GM12878 (cell line): ENCODE measurements at regions of chr4 and their contacts with region 1.

Region 1: GRCh38 chr4:38132107-38132673 is 172.0 kb downstream of the PTTG2 start:
- DNase-seq: peak; percentile 100
- ATAC-seq: peak; percentile 63
- H3K4me3 ChIP-seq: 0 out of 2 replicates have a peak overlapping the region, but pooled peaks have one; percentile 10
- H3K27ac ChIP-seq: peak overlapping the region; percentile 96
- H3K4me1 ChIP-seq: peaks cover 68% of the 10 kb centered on the region
- H3K27me3 ChIP-seq: no peaks in the 10 kb centered on the region
- CTCF ChIP-seq: no peak
- EP300 ChIP-seq: peak; percentile 100
- POLR2A ChIP-seq: peak; percentile 74
- RAD21 ChIP-seq: peak; percentile 14; the same call in 1 of the 2 replicates

Region 2: DNA sequence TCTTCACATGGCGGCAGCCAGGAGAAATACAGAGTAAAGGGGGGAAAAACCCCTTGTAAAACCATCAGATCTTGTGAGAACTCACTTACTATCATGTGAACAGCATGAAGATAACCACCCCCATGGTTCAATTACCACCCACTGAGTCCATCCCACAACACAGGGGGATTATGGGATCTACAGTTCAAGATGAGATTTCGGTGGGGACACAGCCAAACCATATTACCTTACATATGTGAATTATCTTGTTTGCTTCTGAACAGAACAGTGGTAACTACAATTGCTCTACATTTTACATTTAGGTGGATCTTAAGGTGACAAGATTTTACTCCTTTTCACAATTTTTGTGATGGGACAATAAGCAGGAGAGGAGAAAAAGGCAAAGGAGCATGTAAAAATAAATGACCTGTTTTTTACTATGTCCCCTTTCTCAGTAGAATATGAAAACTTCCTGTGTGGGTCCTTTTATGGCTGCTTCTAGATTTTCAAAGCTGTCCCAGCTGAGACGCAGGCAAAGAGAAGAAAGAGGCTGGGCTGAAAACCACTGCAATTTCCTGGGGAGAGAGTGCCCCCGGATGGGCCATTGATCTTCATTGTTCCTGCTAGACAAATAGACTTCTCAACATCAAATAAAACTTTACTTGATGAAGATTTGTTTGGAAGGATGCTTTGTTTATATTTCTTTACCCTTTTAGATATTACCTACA is 351.6 kb before region 1 on chr4:
- CTCF ChIA-PET with region 1: no interaction called
- POLR2A ChIA-PET with region 1: no interaction called
- RAD21 ChIA-PET with region 1: no interaction called
- SMC1A ChIA-PET with region 1: no interaction called
- in situ Hi-C with region 1: no loop called
- intact Hi-C with region 1: no loop called
- DNase-seq: no peak
- ATAC-seq: no peak
- H3K4me3 ChIP-seq: no peak overlapping the region
- H3K27ac ChIP-seq: no peak overlapping the region
- H3K4me1 ChIP-seq: no peaks in the 10 kb centered on the region
- H3K27me3 ChIP-seq: no peaks in the 10 kb centered on the region
- CTCF ChIP-seq: peak in 2 of 3 experiments; percentile 19 to 20; a peak in 2 of 6 replicates
- EP300 ChIP-seq: no peak
- POLR2A ChIP-seq: no peak
- RAD21 ChIP-seq: peak; percentile 47

Region 3: DNA sequence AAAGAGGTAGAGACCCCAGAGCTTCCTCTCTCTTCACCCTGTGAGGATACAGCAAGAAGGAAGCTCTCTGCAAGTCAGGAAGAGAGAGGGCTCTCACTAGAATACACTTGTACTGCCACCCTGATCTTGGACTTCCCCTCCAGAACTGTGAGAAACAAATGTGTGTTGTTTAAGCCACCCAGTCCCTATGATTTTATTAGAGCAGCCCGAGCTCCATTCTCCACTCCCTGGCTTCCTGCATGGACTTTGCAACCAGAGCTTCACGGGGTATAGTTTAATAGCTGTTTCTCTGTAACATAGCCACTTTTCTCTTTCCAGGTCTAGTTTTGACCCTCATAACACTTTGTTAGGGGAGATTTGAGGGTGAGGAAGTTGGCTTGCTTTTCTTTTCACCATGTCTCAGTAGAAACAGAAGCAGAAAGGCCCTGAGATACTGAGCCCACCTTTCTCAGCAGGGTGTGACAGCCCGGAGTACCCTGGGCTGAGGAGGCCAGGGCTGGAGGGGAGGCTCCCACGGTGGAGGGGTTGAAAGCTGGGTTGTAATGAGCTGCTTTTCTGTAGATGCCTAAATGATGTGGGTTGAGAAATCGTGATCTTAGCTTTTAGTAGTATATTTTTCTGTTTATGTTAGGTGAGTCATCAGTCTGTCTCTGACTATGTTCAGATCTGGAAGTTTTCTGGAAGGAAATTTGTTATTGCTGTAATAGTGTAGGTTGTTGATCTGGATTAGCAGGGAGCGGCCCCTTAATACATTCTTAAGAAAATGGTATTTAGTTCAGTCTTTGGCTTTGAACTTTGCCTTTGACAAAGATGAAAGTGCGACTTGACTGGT is 53.4 kb before region 1 on chr4:
- CTCF ChIA-PET with region 1: interaction called, 11 read pairs
- POLR2A ChIA-PET with region 1: interaction called, 13 read pairs
- RAD21 ChIA-PET with region 1: interaction called, 128 read pairs
- SMC1A ChIA-PET with region 1: interaction called, 102 read pairs
- in situ Hi-C with region 1: no loop called
- intact Hi-C with region 1: loop called (anchors 1 kb)
- DNase-seq: no peak
- ATAC-seq: peak; percentile 65
- H3K4me3 ChIP-seq: peak overlapping the region; percentile 7; the same call in 1 of the 2 replicates
- H3K27ac ChIP-seq: peak overlapping the region; percentile 87
- H3K4me1 ChIP-seq: peaks cover 47% of the 10 kb centered on the region
- H3K27me3 ChIP-seq: no peaks in the 10 kb centered on the region
- CTCF ChIP-seq: no peak
- EP300 ChIP-seq: no peak
- POLR2A ChIP-seq: no peak
- RAD21 ChIP-seq: no peak

Region 4: GRCh38 chr4:38119668-38120385 is 12.4 kb before region 1 on chr4:
- CTCF ChIA-PET with region 1: interaction called, 5 read pairs
- POLR2A ChIA-PET with region 1: interaction called, 9 read pairs
- RAD21 ChIA-PET with region 1: interaction called, 9 read pairs
- SMC1A ChIA-PET with region 1: interaction called, 38 read pairs
- in situ Hi-C with region 1: no loop called
- intact Hi-C with region 1: no loop called
- DNase-seq: no peak
- ATAC-seq: peak; percentile 47; the same call in 2 of the 3 replicates
- H3K4me3 ChIP-seq: no peak overlapping the region
- H3K27ac ChIP-seq: no peak overlapping the region
- H3K4me1 ChIP-seq: peaks cover 19% of the 10 kb centered on the region
- H3K27me3 ChIP-seq: no peaks in the 10 kb centered on the region
- CTCF ChIP-seq: no peak
- EP300 ChIP-seq: no peak
- POLR2A ChIP-seq: no peak
- RAD21 ChIP-seq: no peak

Region 5: GRCh38 chr4:38310446-38311043 is 178.4 kb after region 1 on chr4:
- CTCF ChIA-PET with region 1: interaction called, 7 read pairs
- POLR2A ChIA-PET with region 1: interaction called, 4 read pairs
- RAD21 ChIA-PET with region 1: interaction called, 8 read pairs
- SMC1A ChIA-PET with region 1: interaction called, 34 read pairs
- in situ Hi-C with region 1: loop called (anchors 5 kb)
- intact Hi-C with region 1: loop called (anchors 1 kb)
- DNase-seq: peak; percentile 97
- ATAC-seq: peak; percentile 91
- H3K4me3 ChIP-seq: no peak overlapping the region
- H3K27ac ChIP-seq: peak overlapping the region; percentile 77
- H3K4me1 ChIP-seq: peaks cover 61% of the 10 kb centered on the region
- H3K27me3 ChIP-seq: no peaks in the 10 kb centered on the region
- CTCF ChIP-seq: no peak
- EP300 ChIP-seq: peak; percentile 84 to 98
- POLR2A ChIP-seq: peak; percentile 39; the same call in 1 of the 2 replicates
- RAD21 ChIP-seq: peak; percentile 31

Region 6: GRCh38 chr4:38782452-38783108 is 650.4 kb after region 1 on chr4 and contains the start of gene TLR10:
- CTCF ChIA-PET with region 1: interaction called, 4 read pairs
- POLR2A ChIA-PET with region 1: no interaction called
- RAD21 ChIA-PET with region 1: interaction called, 17 read pairs
- SMC1A ChIA-PET with region 1: interaction called, 5 read pairs
- in situ Hi-C with region 1: no loop called
- intact Hi-C with region 1: no loop called
- DNase-seq: peak; percentile 82
- ATAC-seq: peak; percentile 74
- H3K4me3 ChIP-seq: peak within 1 kb of the TSS; percentile 81
- H3K27ac ChIP-seq: peak within 1 kb of the TSS; percentile 96
- H3K4me1 ChIP-seq: peaks cover 22% of the 10 kb centered on the region
- H3K27me3 ChIP-seq: no peaks in the 10 kb centered on the region
- CTCF ChIP-seq: peak; percentile 60 to 68 (median 63)
- EP300 ChIP-seq: no peak
- POLR2A ChIP-seq: peak; percentile 72
- RAD21 ChIP-seq: peak; percentile 83
- polyA plus RNA-seq, gene TLR10: 31.5 to 41.8 TPM